Activated T-helper 2 cell treated with anti-CD3 and anti-CD28 coated beads, Interferon-gamma antibody, Interleukin-2, Interleukin-4, amounts not matched to agents 10 μg/mL and 5 μg/mL and 100 μg/mL, durations not matched to agents 14 hours and 24 hours and 36 hours (primary cell): ENCODE measurements at regions of chr14 and their contacts with region 1.

Region 1: DNA sequence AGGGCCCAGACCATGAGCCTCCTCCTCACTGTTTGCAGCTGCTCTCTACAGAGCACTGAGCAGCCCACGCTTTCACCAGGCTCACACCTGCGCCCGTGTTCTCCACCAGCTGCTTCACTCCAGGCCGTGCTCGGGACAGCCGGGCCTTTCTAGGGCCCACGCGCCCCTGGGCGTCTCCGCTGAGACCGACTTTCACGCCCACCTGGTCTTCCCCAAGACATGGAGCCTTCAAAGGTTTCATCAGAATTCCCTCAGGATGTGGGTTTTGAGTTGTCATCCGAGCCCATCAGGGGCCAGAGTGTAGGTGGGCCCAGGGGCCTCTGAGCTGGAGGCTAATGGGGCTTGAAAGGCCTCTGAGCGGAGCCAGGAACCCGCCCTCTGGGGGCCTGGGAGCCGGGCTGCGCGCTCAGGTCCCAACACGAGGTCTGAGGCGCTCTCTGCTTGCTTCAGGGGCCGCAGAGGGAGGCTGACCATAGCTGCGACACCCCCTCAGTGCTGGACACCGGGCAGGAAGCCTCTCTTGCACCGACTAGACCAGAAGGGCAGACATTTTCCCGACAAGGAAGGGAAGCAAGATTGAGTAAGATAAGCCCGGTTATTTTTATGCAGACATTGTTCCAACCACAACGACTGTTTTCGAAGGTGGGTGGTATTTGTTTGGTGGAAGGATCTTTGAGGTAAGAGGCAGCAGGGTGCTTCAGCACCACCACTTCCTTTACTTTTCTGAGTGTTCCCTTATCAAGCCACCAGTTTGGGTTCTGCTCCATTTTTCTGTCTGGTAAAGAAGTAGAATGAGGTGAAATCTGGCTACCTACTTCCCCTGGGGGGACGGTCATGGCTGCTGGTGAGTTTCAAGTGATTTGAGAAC is 125.0 kb upstream of the FUT8 start:
- DNase-seq: peak; percentile 52
- H3K4me3 Mint-ChIP-seq: peak overlapping the region; percentile 62
- H3K27ac Mint-ChIP-seq: peak overlapping the region; percentile 96
- H3K4me1 Mint-ChIP-seq: peaks cover 66% of the 10 kb centered on the region
- H3K27me3 Mint-ChIP-seq: no peaks in the 10 kb centered on the region

Region 2: DNA sequence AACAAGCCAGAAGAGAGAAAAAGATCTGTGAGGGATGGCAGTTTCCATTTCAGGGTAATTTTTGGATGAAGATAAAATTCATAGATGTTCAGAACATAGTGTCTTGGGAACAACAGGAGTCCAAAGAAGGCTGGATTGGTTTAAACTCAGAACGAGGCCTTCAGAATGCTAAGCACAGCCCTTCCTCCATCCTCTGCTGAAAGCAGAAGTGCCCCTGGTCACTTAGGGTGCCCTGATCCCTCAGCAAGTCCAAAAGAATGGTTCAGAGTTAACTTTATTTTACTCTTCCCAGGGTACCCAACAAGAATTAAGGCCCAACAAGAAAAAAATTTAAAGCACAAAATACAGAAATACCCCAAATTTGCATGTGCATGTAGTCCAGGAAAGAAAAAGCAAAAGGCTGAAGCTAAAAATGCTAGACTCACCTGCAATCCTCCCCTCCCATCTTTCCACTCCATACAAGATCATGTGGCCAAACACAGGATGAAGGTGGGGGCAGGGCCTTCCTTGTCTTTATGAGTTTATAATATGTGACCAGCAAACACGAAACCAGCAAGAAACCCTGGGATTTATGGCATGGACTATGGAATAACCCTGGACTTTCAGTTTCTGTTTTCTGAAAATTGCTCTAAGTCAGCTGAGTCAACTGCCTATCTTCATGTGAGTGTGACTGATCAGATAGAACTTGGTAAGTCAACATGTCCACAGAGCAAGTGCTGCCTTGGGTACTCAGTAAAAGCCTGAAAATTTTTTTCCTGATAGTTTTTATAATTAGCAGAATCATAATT is 206.3 kb before region 1 on chr14:
- intact Hi-C with region 1: no loop called
- DNase-seq: no peak
- H3K4me3 Mint-ChIP-seq: no peak overlapping the region
- H3K27ac Mint-ChIP-seq: peak overlapping the region; percentile 38
- H3K4me1 Mint-ChIP-seq: peaks cover 31% of the 10 kb centered on the region
- H3K27me3 Mint-ChIP-seq: no peaks in the 10 kb centered on the region

Region 3: GRCh38 chr14:65170768-65171507 is 116.6 kb before region 1 on chr14:
- intact Hi-C with region 1: loop called (anchors 1 kb)
- DNase-seq: peak; percentile 53
- H3K4me3 Mint-ChIP-seq: peak overlapping the region; percentile 59
- H3K27ac Mint-ChIP-seq: peak overlapping the region; percentile 75
- H3K4me1 Mint-ChIP-seq: peaks cover 33% of the 10 kb centered on the region
- H3K27me3 Mint-ChIP-seq: peaks cover 2% of the 10 kb centered on the region

Region 4: GRCh38 chr14:65302571-65303189 is 15.2 kb after region 1 on chr14:
- intact Hi-C with region 1: loop called (anchors 1 kb)
- DNase-seq: peak; percentile 24
- H3K4me3 Mint-ChIP-seq: peak overlapping the region; percentile 53
- H3K27ac Mint-ChIP-seq: peak overlapping the region; percentile 94
- H3K4me1 Mint-ChIP-seq: peaks cover 63% of the 10 kb centered on the region
- H3K27me3 Mint-ChIP-seq: no peaks in the 10 kb centered on the region

Region 5: GRCh38 chr14:65321370-65321875 is 33.9 kb after region 1 on chr14:
- intact Hi-C with region 1: no loop called
- DNase-seq: no peak
- H3K4me3 Mint-ChIP-seq: no peak overlapping the region
- H3K27ac Mint-ChIP-seq: peak overlapping the region; percentile 64
- H3K4me1 Mint-ChIP-seq: peaks cover 46% of the 10 kb centered on the region
- H3K27me3 Mint-ChIP-seq: no peaks in the 10 kb centered on the region

Region 6: GRCh38 chr14:65356327-65356852 is 68.9 kb after region 1 on chr14:
- intact Hi-C with region 1: loop called (anchors 1 kb)
- DNase-seq: peak; percentile 47
- H3K4me3 Mint-ChIP-seq: peak overlapping the region; percentile 20
- H3K27ac Mint-ChIP-seq: peak overlapping the region; percentile 74
- H3K4me1 Mint-ChIP-seq: peaks cover 48% of the 10 kb centered on the region
- H3K27me3 Mint-ChIP-seq: no peaks in the 10 kb centered on the region

Region 7: DNA sequence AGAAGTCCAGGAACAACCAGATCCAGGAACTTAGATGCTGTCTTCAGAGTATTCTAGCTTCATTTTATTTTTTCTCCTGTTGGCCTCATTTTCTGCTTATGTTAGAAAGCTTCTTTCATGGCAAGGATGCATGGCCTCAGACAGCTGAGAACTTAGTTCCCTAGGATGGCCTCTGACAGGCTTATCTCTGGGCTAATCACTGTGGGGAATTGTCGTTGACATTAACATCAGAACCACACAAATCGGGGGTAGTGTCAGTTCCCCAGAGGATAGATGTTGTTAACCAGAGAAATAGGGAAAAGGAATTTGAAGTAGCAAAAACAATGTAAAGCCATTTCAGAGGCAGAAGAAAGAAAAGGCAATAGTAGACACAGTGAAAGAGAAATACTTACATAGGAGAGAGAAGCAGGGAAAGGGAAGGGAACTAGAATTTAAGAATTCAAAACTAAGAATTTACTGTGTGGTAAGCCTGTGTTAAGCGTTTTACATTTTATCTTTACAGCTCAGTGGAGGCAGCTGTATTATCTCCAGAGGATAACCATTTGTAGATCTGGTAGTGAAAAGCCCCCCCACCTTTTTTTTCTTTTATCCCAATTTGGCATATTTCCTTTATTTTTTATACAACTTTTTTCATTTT is 146.8 kb after region 1 on chr14:
- intact Hi-C with region 1: no loop called
- DNase-seq: no peak
- H3K4me3 Mint-ChIP-seq: no peak overlapping the region
- H3K27ac Mint-ChIP-seq: peak overlapping the region; percentile 46
- H3K4me1 Mint-ChIP-seq: peaks cover 57% of the 10 kb centered on the region
- H3K27me3 Mint-ChIP-seq: no peaks in the 10 kb centered on the region

Region 8: GRCh38 chr14:65462411-65462810 is 174.9 kb after region 1 on chr14:
- intact Hi-C with region 1: loop called (anchors 1 kb)
- DNase-seq: no peak
- H3K4me3 Mint-ChIP-seq: peak overlapping the region; percentile 34
- H3K27ac Mint-ChIP-seq: peak overlapping the region; percentile 87
- H3K4me1 Mint-ChIP-seq: peaks cover 48% of the 10 kb centered on the region
- H3K27me3 Mint-ChIP-seq: no peaks in the 10 kb centered on the region

Region 9: DNA sequence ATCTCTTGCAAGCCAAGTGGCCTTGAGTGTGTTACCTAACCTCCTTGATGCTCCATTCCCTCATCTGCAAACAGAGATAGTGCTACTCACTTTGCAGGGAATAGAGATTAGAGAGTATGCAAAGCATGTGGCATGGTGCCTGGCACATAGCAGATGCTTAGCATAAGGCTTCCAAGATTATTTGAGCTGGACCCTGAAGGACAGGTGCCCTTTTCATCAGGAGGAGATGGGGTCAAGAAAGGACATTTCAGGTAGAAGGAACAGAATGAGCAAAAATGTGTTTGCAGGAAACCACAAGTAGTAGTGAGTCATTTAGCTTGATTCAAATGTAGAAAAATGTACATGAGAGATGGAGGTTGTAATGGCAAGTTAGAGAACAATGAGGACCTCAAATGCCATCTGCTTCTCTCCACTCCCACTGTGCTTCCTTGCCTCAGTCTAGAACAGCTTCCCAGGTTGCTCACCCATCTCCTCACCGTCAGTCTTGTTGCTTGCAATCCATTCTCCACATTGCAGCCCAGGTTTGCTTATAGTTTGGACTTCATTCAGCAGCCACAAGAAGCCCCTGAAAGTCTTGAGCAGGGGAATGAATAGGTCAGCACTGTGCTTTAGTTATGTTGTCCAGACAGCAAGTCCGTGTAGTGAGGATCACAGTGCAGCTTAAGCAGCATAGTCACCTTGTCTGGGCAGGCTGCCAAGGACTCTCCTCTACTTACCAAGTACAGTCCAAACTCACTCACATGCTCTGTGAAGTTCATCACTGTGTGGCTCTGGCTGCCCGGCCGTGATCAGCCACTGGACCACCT is 662.4 kb after region 1 on chr14:
- intact Hi-C with region 1: loop called (anchors 5 kb)
- DNase-seq: no peak
- H3K4me3 Mint-ChIP-seq: no peak overlapping the region
- H3K27ac Mint-ChIP-seq: peak overlapping the region; percentile 65
- H3K4me1 Mint-ChIP-seq: peaks cover 42% of the 10 kb centered on the region
- H3K27me3 Mint-ChIP-seq: no peaks in the 10 kb centered on the region